Naive thymus-derived CD4-positive, alpha-beta T cell (primary cell): ENCODE measurements at regions of chr19 and their contacts with region 1.

Region 1: DNA sequence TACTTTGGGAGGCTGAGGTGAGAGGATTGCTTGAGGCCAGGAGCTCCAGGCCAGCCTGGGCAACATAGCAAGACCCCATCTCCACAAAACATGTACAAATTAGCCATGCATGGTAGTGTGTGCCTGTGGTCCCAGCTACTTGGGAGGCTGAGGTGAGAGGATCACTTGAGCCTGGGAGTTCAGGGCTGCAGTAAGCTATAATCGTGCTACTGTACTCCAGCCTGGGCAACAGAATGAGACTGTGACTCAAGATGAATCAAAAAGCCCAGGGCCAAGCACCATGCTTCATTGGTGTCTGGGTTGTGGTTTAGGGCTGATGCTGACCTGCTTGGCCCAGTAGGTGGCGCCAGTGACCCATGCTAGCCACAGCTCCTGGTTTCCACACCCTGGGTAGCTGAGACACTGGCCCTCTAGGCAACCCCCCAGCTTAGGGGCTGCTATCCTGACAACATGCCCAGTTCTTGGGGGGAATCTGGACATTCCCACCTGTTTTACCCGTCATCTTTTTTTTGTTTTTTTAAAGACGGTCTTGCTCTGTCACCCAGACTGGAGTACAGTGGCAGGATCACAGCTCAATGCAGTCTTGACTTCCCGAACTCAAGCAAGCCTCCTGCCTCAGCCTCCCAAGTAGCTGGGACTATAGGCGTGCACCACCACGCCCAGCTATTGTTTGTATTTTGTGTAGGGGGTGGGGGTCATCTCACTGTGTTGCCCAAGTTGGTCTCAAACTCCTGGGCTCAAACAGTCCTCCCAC is 5.5 kb downstream of the CCDC124 start:
- DNase-seq: peak; percentile 67 to 85 (median 78)
- ATAC-seq: peak; percentile 98
- H3K4me3 ChIP-seq: no peak overlapping the region
- H3K4me3 Mint-ChIP-seq: no peak overlapping the region
- H3K27ac ChIP-seq: no peak overlapping the region
- H3K27ac Mint-ChIP-seq: no peak overlapping the region
- H3K4me1 ChIP-seq: peaks cover 5 to 8% of the 10 kb centered on the region in 2 donors
- H3K4me1 Mint-ChIP-seq: peaks cover 5 to 7% (median 6%) of the 10 kb centered on the region in 7 donors
- H3K27me3 ChIP-seq: no peaks in the 10 kb centered on the region
- H3K27me3 Mint-ChIP-seq: no peaks in the 10 kb centered on the region

Region 2: GRCh38 chr19:17590877-17591276 is 347.4 kb before region 1 on chr19:
- CTCF ChIA-PET with region 1: no interaction called
- POLR2A ChIA-PET with region 1: no interaction called
- intact Hi-C with region 1: no loop called
- DNase-seq: no peak
- ATAC-seq: no peak
- H3K4me3 ChIP-seq: no peak overlapping the region
- H3K4me3 Mint-ChIP-seq: no peak overlapping the region
- H3K27ac ChIP-seq: no peak overlapping the region
- H3K27ac Mint-ChIP-seq: no peak overlapping the region
- H3K4me1 ChIP-seq: no peaks in the 10 kb centered on the region
- H3K4me1 Mint-ChIP-seq: peaks cover 0 to 3% (median 0%) of the 10 kb centered on the region in 7 donors
- H3K27me3 ChIP-seq: no peaks in the 10 kb centered on the region
- H3K27me3 Mint-ChIP-seq: peaks cover 0 to 17% (median 11%) of the 10 kb centered on the region in 5 donors

Region 3: DNA sequence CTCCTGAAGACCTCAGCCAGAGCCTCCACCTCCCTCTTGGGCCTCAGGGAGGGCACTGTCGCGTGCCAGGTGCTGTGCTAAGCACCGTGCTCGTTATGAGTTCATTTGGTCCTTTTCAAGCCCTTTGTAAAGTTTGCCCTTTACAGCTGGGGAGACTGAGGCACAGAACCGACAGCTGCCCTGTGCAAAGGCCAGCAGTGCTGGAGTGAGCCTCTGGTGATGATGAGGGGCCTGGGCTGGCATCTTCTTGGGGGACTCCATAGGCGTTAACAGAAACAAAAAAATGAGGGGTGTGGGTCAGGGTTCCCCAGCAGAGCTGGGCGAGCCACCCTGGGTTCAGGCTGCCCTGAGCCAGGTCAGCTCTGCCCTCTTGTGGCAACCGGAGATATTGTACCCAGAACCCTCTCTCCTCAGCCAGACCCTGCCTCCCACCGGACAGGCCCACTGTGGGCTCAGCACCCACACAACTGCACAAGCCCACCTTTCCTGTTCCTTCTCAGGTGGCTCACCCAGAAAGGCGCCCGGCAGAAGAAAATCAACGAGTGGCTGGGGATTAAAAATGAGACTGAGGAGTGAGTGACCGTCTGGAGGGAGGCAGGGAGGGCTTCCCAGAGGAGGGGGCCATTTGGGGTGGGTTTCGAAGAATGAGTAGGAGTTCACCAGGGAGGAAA is 229.8 kb after region 1 on chr19:
- CTCF ChIA-PET with region 1: interaction called, 4 read pairs
- POLR2A ChIA-PET with region 1: no interaction called
- intact Hi-C with region 1: loop called in 1 of 2 experiments (anchors 1 kb)
- DNase-seq: peak in 7 of 9 donors; percentile 32 to 70 (median 59)
- ATAC-seq: peak; percentile 71
- H3K4me3 ChIP-seq: no peak overlapping the region
- H3K4me3 Mint-ChIP-seq: no peak overlapping the region
- H3K27ac ChIP-seq: no peak overlapping the region
- H3K27ac Mint-ChIP-seq: peak overlapping the region in 2 of 9 donors; percentile 5 to 65
- H3K4me1 ChIP-seq: peaks cover 0 to under 1% of the 10 kb centered on the region in 2 donors
- H3K4me1 Mint-ChIP-seq: peaks cover 0 to 14% (median 4%) of the 10 kb centered on the region in 7 donors
- H3K27me3 ChIP-seq: no peaks in the 10 kb centered on the region
- H3K27me3 Mint-ChIP-seq: no peaks in the 10 kb centered on the region